Activated CD4-positive, alpha-beta T cell treated with anti-CD3 and anti-CD28 coated beads for 36 hours (primary cell): ENCODE measurements at regions of chr15 and their contacts with region 1.

Region 1: DNA sequence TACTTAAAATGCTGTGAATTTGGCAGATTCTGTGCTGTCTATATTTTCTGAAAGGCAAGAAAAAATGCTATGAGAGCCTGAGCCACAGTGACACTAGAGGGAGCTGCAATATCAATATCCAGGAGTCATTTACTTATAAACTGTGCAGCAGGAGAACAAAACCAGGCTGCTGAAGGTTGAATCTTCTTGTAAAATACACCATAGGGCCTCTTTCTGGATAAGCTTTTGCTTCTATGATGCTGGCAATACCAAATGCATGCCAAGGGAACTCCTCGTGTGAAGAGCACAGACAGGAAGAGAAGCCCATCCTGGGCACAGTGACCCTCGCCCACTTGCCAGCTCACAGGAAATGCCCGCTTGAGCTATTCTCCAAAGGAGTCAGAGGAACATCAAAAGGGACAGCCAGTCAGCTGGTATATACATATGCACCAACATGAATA is 48.0 kb upstream of the TSPAN3 start:
- DNase-seq: peak; percentile 39
- ATAC-seq: peak; percentile 47
- H3K4me3 Mint-ChIP-seq: no peak overlapping the region
- H3K27ac Mint-ChIP-seq: no peak overlapping the region
- H3K4me1 Mint-ChIP-seq: peaks cover 7% of the 10 kb centered on the region
- H3K27me3 Mint-ChIP-seq: no peaks in the 10 kb centered on the region

Region 2: DNA sequence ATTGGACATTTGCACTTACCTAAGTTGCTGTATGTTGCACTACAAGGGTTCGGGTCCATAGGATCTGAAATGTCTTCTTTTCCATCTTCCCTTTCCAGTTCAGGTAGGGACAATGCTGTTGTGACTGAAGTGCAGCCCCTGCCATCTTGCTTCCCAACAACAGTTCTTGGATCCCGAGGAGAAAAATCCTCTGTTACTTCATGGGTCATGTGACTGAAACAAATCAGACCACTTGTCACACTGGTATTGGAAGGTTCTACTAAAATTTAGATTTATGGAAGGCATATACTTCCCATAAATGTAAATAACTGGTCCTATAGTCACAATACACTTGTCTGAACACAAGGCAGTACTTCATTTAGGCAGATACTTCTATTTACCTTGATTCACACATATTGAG is 39.6 kb after region 1 on chr15:
- CTCF ChIA-PET with region 1: interaction called, 3 read pairs
- POLR2A ChIA-PET with region 1: no interaction called
- intact Hi-C with region 1: loop called in 1 of 2 experiments (anchors 1 kb)
- DNase-seq: no peak
- ATAC-seq: no peak
- H3K4me3 Mint-ChIP-seq: no peak overlapping the region
- H3K27ac Mint-ChIP-seq: no peak overlapping the region
- H3K4me1 Mint-ChIP-seq: peaks cover 24% of the 10 kb centered on the region
- H3K27me3 Mint-ChIP-seq: no peaks in the 10 kb centered on the region

Region 3: DNA sequence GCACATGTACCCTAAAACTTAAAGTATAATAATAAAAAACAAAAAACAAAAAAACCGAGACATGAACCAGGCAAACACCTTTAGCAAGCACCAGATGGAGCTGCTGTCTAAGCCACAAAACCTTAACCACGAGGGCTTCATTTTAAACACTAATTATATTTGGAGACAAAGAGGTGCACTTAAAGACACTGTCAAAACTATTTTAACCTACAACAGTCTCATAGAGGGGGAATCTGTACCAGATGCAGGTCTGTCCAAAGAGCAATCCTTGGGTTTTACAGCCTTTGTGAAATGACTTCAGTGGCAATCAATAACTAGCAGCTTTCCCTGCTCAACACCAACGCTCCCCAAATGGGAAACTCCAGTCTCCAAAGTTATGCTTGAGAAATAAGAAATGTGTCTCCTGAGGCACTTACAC is 67.7 kb after region 1 on chr15:
- CTCF ChIA-PET with region 1: interaction called, 5 read pairs
- POLR2A ChIA-PET with region 1: no interaction called
- intact Hi-C with region 1: loop called in 1 of 2 experiments (anchors 5 kb)
- DNase-seq: peak; percentile 30
- ATAC-seq: no peak
- H3K4me3 Mint-ChIP-seq: no peak overlapping the region
- H3K27ac Mint-ChIP-seq: no peak overlapping the region
- H3K4me1 Mint-ChIP-seq: peaks cover 55% of the 10 kb centered on the region
- H3K27me3 Mint-ChIP-seq: no peaks in the 10 kb centered on the region